ENCODE measurements at regions of chr5 and their contacts with region 1.

Region 1: DNA sequence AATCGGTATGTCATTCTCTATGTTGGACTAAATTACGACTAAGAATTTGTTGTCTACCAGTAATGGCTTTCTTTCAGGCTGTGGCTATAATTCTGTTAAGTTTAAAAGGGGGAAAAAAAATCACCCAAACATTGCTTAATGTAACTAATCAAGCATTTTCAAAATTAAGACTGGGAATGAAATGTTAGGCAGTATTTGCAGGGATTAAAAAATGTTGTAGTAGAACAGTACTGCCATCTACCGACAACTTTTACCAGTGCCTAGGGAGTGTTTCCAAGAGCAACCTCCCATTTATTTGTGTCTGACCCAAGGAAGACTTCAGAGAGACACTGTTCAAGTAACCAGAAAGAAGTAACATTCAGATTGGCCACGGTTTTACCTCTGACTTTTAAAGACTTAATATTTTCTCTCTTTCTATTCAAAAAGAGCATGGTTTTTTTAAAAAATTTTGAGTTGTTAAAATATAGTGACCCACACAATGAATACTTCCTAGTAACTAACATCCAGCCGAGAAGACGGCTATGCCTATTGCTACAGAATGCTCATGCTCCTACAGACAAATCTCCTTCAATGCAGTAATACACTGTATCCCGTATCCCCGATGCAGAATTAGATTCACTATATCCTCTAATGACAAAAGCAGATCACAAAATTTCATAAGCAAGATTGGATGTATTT is 92.4 kb downstream of the ARL15 start:
- DNase-seq: no peak
- ATAC-seq: peak; percentile 88

Region 2: GRCh38 chr5:53425598-53426511 is 792.1 kb before region 1 on chr5:
- intact Hi-C with region 1: loop called (anchors 10 kb)
- DNase-seq: no peak
- ATAC-seq: peak; percentile 33

Region 3: GRCh38 chr5:54278031-54278830 is 60.3 kb after region 1 on chr5:
- intact Hi-C with region 1: no loop called
- DNase-seq: no peak
- ATAC-seq: peak; percentile 55

Measured in sciatic nerve (tissue), 2 donors.